ENCODE measurements at regions of chr19 and their contacts with region 1.

Region 1: GRCh38 chr19:28633319-28634018 is 579.5 kb downstream of the UQCRFS1 start:
- DNase-seq: peak; percentile 62 to 69 (median 65)
- ATAC-seq: peak; percentile 93 to 99 (median 96)
- H3K4me3 ChIP-seq: no peak overlapping the region
- H3K27ac ChIP-seq: no peak overlapping the region
- H3K4me1 ChIP-seq: no peaks in the 10 kb centered on the region
- H3K27me3 ChIP-seq: no peaks in the 10 kb centered on the region
- CTCF ChIP-seq: peak; percentile 90 to 96 (median 94)
- POLR2A ChIP-seq: no peak

Region 2: DNA sequence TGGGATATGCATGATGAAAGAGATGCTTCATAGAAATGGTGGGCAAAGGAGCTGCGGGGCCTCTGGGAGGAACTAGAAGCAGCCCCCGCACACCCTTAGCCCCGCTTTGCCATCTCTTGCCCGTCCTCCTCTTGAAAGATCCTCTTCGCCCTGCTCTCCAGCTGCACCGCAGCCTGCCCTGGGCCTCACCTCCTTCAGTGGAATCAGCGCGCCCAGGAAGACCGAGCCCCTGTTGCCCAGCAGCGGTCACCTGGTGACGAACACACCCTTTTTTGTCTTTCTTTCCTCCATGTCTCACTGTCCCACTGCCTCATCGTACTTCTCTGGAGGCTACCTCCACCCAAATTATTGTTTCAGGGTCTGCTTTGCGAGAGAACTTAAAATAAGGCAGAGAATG is 228.1 kb before region 1 on chr19:
- intact Hi-C with region 1: no loop called
- DNase-seq: no peak
- ATAC-seq: no peak
- H3K4me3 ChIP-seq: no peak overlapping the region
- H3K27ac ChIP-seq: no peak overlapping the region
- H3K4me1 ChIP-seq: no peaks in the 10 kb centered on the region
- H3K27me3 ChIP-seq: no peaks in the 10 kb centered on the region
- CTCF ChIP-seq: no peak
- POLR2A ChIP-seq: no peak

Region 3: DNA sequence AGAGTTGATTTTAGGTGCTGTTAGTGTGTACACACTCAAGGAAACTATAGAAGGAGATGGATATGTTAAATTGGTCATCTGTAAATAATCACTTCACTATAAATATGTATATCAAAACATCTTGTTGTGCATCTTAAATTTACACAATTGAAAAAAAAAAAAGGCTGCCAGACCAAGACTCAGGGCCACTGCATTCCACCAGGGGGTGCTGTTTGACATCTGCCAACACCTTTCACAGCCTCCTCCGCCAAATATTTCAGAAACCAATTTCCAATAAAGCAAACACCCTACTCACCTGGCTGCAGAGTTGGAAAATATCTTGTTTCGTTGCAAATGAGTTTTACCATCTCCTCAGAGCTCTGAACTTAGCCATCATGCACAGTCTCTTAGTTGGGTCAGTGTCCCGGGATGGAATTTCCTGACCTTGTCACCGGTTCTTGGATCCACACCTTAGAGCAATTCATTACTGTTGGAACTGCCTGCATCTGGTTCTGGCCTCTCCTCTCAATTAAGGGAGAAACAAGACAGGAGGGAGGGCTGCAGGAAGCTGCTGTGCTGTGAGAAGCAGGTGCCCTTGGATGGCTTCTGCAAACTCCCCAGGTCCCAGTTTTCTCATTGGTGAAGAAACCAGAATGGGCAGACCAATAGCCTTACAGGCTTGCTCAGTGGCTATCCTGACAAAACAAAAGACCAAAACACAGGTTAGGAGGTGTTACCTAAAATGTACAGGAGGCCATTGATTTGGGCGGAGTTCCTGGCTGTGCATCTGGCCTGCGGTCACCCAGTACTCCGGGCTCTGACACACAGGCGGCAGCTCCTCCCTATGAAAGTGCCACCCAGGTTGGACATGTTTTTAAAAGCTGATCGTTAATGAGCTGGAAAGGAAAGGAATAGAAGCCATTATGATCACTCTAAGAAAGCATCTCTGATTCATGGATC is 167.1 kb before region 1 on chr19:
- intact Hi-C with region 1: loop called (anchors 5 to 10 kb)
- DNase-seq: peak in 2 of 3 donors; percentile 68 to 70
- ATAC-seq: peak; percentile 55 to 79 (median 71)
- H3K4me3 ChIP-seq: no peak overlapping the region
- H3K27ac ChIP-seq: no peak overlapping the region
- H3K4me1 ChIP-seq: no peaks in the 10 kb centered on the region
- H3K27me3 ChIP-seq: no peaks in the 10 kb centered on the region
- CTCF ChIP-seq: peak; percentile 59 to 92 (median 86)
- POLR2A ChIP-seq: no peak

Region 4: GRCh38 chr19:28864577-28865042 is 231.1 kb after region 1 on chr19:
- intact Hi-C with region 1: no loop called
- DNase-seq: no peak
- ATAC-seq: no peak
- H3K4me3 ChIP-seq: no peak overlapping the region
- H3K27ac ChIP-seq: no peak overlapping the region
- H3K4me1 ChIP-seq: no peaks in the 10 kb centered on the region
- H3K27me3 ChIP-seq: no peaks in the 10 kb centered on the region
- CTCF ChIP-seq: no peak
- POLR2A ChIP-seq: no peak

Measured in right lobe of liver (tissue), 6 donors.